Activated naive CD8-positive, alpha-beta T cell treated with anti-CD3 and anti-CD28 coated beads, Interleukin-2, amount 10 ng/mL, durations not matched to agents 7 days and 5 days (primary cell): ENCODE measurements at regions of chr7 and their contacts with region 1.

Region 1: GRCh38 chr7:42931834-42932651 is at the starts of genes MRPL32 and PSMA2:
- DNase-seq: peak; percentile 91
- ATAC-seq: peak; percentile 99
- H3K4me3 Mint-ChIP-seq: peak within 1 kb of the TSS; percentile 99
- H3K27ac Mint-ChIP-seq: peak within 1 kb of the TSS; percentile 99
- H3K4me1 Mint-ChIP-seq: peaks cover 45% of the 10 kb centered on the region
- H3K27me3 Mint-ChIP-seq: no peaks in the 10 kb centered on the region
- total RNA-seq, gene MRPL32: 45.2 to 46.6 TPM
- total RNA-seq, gene PSMA2: 98.9 to 99.8 TPM

Region 2: GRCh38 chr7:42886923-42887505 is 45.0 kb before region 1 on chr7:
- POLR2A ChIA-PET with region 1: interaction called, 16 read pairs
- DNase-seq: no peak
- ATAC-seq: no peak
- H3K4me3 Mint-ChIP-seq: peak overlapping the region; percentile 86
- H3K27ac Mint-ChIP-seq: no peak overlapping the region
- H3K4me1 Mint-ChIP-seq: peaks cover 20% of the 10 kb centered on the region
- H3K27me3 Mint-ChIP-seq: peaks cover 4% of the 10 kb centered on the region

Region 3: DNA sequence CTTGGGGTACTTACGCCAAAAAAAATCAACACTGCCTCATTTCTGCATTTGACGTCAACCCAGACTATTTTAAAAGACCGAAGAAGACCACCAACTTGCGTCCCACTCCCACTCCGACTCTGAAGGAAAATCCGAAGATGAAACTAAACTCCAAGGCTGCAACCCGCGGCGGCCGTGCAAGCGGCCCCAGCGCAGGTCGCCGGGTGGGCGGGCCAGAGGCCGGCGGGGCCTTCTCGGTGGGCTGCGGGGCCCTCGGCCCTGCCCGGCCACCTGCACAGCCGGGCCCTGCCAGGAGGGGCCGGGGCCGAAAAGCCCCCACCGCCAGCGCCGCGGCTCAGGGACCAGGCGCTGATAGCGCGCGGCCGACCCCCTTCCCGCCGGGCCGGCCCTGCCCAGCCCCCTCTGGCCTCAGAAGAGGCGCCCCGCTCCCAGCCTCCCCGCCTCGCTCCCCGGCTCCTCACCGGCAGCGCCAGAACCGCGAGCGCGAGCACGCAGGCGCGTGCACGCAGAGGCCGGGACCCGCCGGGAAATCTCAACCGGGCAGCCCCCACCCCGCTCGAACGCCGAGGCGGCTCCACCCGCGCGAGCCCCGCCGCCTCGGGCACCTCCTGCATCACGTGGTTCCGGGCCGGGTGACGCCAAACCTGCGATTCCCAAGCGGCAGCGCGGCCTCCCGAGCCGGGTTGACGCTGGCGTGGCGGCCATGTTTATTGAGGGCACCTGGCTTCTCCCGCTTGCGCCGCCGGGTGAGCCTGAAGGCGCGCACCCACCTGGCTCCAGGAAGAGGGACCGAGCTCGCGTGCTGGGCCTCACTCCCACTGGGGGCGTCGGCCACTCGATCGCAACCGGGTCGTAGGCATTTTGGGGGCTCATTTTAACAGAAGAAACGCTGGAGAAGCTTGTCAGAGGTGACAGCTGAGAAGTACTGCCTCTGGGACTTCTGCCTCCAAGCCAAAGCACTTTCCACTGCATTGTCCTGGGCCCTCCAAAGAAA is 20.3 kb before region 1 on chr7 and contains the start of gene C7orf25:
- POLR2A ChIA-PET with region 1: interaction called, 33 read pairs
- DNase-seq: peak; percentile 96
- ATAC-seq: peak; percentile 94
- H3K4me3 Mint-ChIP-seq: peak within 1 kb of the TSS; percentile 91
- H3K27ac Mint-ChIP-seq: peak within 1 kb of the TSS; percentile 94
- H3K4me1 Mint-ChIP-seq: peaks cover 55% of the 10 kb centered on the region
- H3K27me3 Mint-ChIP-seq: no peaks in the 10 kb centered on the region
- total RNA-seq, gene C7orf25: 6.0 to 8.1 TPM

Region 4: DNA sequence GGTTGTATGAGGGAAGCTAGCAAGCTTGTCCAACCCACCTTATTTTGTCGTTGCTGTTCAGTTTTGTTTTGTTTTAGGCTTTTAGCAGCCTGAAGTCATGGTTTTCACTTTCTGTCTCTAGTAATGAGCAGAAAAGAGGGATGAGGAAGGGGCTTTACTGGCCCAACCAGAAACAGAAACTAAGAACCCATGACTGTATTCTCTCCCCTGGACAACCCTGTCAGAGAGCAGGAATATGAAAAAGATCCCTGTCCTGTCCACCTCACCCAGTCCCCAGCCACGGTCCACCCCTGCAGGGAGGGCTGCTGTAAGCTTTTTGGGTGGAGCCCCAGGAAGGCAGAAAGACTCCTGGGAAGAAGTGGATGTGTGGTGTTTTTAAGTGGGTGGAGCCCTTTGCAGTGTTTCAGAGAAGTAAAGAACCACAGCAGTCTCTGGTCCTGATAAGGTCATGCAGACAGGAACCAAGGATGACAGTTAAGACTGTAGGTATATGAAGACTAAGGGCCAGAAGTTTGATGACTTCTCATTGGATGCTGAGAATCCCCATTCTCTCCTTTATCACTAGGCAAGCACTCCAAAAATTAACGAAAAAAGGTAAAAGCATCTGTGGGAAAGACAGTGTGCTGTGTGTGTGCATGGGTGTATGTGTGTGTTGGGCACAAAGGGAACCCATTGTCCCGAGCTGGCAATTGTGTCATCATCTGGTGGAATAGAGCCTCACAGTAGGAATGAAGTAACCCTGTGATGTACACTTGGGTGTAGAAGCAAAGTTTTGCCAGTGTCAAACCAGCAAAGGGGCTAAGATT is 14.0 kb after region 1 on chr7:
- POLR2A ChIA-PET with region 1: interaction called, 10 read pairs
- DNase-seq: no peak
- ATAC-seq: peak; percentile 89
- H3K4me3 Mint-ChIP-seq: peak overlapping the region; percentile 79
- H3K27ac Mint-ChIP-seq: peak overlapping the region; percentile 86
- H3K4me1 Mint-ChIP-seq: peaks cover 13% of the 10 kb centered on the region
- H3K27me3 Mint-ChIP-seq: no peaks in the 10 kb centered on the region

Region 5: GRCh38 chr7:42993038-42993437 is 61.0 kb after region 1 on chr7:
- POLR2A ChIA-PET with region 1: no interaction called
- DNase-seq: no peak
- ATAC-seq: no peak
- H3K4me3 Mint-ChIP-seq: no peak overlapping the region
- H3K27ac Mint-ChIP-seq: no peak overlapping the region
- H3K4me1 Mint-ChIP-seq: no peaks in the 10 kb centered on the region
- H3K27me3 Mint-ChIP-seq: peaks cover 9% of the 10 kb centered on the region

Region 6: DNA sequence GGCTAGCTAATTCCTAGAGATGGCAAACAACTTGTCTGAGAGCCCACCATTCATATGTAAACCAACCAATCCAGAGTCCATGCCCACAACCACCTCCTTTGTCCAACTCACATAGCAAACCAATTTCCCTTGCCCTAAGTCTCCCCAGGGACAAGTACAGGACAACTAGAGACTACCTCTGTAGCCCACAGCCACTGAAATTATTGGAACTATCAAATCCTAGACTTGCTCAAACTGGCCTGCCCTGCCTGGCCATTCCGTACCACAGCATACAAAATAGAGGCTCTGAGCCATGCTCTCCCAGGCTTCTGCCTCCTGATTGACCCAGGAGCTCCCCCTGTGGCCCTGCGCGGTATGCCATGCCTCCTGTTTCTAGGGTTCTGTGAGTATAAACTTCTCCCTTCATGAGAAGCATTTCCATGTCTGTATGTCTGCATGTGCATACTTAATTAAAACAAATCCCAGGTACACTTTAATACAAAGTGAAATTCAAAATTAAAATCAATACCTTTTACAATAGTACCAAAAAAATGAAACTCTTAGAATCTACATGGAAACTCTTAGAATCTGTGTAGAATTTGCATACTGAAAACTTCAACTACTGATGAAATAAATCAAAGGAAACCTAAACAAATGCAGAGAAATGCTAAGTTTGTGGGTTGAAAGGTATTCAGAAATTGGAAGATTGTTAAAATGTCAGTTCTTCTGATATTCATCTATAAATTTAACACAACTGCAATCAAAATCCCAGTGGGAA is 176.4 kb after region 1 on chr7:
- POLR2A ChIA-PET with region 1: no interaction called
- DNase-seq: peak; percentile 66
- ATAC-seq: peak; percentile 82
- H3K4me3 Mint-ChIP-seq: no peak overlapping the region
- H3K27ac Mint-ChIP-seq: no peak overlapping the region
- H3K4me1 Mint-ChIP-seq: peaks cover 5% of the 10 kb centered on the region
- H3K27me3 Mint-ChIP-seq: peaks cover 50% of the 10 kb centered on the region